CD8-positive, alpha-beta T cell (primary cell): ENCODE measurements at regions of chr7 and their contacts with region 1.

Region 1: DNA sequence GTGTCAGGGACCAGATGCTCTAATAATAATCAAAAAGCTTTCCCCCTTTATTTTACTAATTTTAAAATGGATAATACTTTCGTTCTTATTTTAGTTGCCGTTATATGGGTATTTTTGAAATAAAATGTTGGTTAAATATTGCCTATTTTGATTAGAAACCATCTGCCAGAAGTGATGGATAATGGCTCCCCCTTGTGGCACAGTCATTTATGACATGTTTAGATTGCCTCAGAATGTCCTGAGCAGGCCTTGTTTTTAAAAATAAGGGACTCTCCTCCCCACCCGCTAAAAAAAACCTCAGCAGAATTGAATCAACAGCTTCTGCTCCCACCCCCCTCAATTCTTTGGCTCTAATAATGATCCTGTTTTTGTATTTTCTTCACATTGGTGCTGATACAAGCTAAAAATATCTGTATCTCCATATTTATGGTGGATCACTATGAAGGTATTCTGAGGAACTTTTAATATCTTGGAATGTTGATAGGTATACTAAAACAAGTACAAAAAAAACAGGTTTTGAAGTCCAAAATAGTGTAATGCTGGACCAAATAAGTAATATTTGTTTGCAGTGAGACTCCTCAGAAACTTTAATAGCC is 38.8 kb downstream of the TMEM60 start:
- DNase-seq: peak; percentile 37 to 86 (median 69)
- ATAC-seq: peak; percentile 88
- H3K4me3 ChIP-seq: no peak overlapping the region
- H3K4me3 Mint-ChIP-seq: no peak overlapping the region
- H3K27ac ChIP-seq: no peak overlapping the region
- H3K27ac Mint-ChIP-seq: peak overlapping the region; percentile 17
- H3K4me1 ChIP-seq: no peaks in the 10 kb centered on the region
- H3K4me1 Mint-ChIP-seq: peaks cover 51% of the 10 kb centered on the region
- H3K27me3 ChIP-seq: no peaks in the 10 kb centered on the region
- H3K27me3 Mint-ChIP-seq: no peaks in the 10 kb centered on the region
- CTCF ChIP-seq: peak; percentile 97

Region 2: DNA sequence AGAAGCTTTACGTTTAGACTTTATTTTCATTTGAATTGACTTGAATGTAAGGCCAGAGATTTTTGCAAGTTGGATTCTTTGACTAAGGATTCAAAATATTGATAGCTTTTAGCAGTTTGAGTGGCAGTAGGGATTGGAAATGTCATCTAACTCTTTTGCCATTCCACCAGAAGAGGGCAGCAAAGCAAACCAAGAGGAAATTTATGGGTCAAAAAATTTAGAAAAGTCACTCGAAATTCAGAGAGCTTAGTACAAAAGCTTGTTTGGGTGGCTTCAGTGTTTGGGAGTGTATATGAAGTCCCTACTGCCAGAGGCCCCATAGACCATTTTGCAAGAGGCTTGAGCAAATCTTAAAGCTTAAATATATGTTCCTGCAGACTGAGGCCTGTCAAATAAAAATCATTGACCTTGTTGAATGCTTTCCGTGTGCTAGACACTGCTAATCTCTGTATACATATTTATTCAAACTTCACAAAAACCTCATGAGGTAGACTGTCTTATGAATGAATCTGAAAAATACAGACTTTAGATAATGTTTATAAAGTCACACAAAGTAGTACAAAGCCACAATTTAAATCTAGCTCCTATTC is 107.7 kb before region 1 on chr7:
- CTCF ChIA-PET with region 1: interaction called, 102 read pairs
- POLR2A ChIA-PET with region 1: no interaction called
- intact Hi-C with region 1: loop called (anchors 1 kb)
- DNase-seq: peak in 5 of 9 experiments; percentile 13 to 62 (median 37)
- ATAC-seq: peak; percentile 44
- H3K4me3 ChIP-seq: no peak overlapping the region
- H3K4me3 Mint-ChIP-seq: no peak overlapping the region
- H3K27ac ChIP-seq: no peak overlapping the region
- H3K27ac Mint-ChIP-seq: no peak overlapping the region
- H3K4me1 ChIP-seq: no peaks in the 10 kb centered on the region
- H3K4me1 Mint-ChIP-seq: no peaks in the 10 kb centered on the region
- H3K27me3 ChIP-seq: no peaks in the 10 kb centered on the region
- H3K27me3 Mint-ChIP-seq: no peaks in the 10 kb centered on the region
- CTCF ChIP-seq: peak; percentile 78

Region 3: DNA sequence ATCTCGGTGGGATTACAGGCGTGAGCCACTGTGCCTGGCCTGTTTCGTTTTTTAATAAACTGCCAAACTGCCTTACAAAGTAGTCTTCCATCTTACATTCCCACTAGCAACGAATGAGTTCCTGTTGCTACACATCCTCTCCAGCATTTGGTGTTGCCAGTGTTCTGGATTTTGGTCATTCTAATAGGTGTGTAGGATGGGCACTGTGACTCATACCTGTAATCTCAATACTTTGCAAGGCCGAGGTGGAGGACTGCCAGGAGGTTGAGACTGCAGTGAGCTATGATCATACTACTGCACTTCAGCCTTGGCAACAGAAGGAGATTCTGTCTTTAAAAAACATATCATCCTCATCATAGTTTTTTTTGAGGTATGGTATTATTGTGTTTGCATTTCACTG is 84.5 kb before region 1 on chr7:
- CTCF ChIA-PET with region 1: interaction called, 10 read pairs
- POLR2A ChIA-PET with region 1: no interaction called
- intact Hi-C with region 1: loop called in 1 of 2 experiments (anchors 5 kb)
- DNase-seq: no peak
- ATAC-seq: no peak
- H3K4me3 ChIP-seq: no peak overlapping the region
- H3K4me3 Mint-ChIP-seq: no peak overlapping the region
- H3K27ac ChIP-seq: no peak overlapping the region
- H3K27ac Mint-ChIP-seq: no peak overlapping the region
- H3K4me1 ChIP-seq: no peaks in the 10 kb centered on the region
- H3K4me1 Mint-ChIP-seq: no peaks in the 10 kb centered on the region
- H3K27me3 ChIP-seq: no peaks in the 10 kb centered on the region
- H3K27me3 Mint-ChIP-seq: no peaks in the 10 kb centered on the region
- CTCF ChIP-seq: no peak

Region 4: GRCh38 chr7:77734659-77735421 is 24.6 kb before region 1 on chr7:
- CTCF ChIA-PET with region 1: interaction called, 7 read pairs
- POLR2A ChIA-PET with region 1: no interaction called
- intact Hi-C with region 1: loop called in 1 of 2 experiments (anchors 2 kb)
- DNase-seq: no peak
- ATAC-seq: no peak
- H3K4me3 ChIP-seq: no peak overlapping the region
- H3K4me3 Mint-ChIP-seq: no peak overlapping the region
- H3K27ac ChIP-seq: no peak overlapping the region
- H3K27ac Mint-ChIP-seq: no peak overlapping the region
- H3K4me1 ChIP-seq: peaks cover 15% of the 10 kb centered on the region
- H3K4me1 Mint-ChIP-seq: peaks cover 47% of the 10 kb centered on the region
- H3K27me3 ChIP-seq: no peaks in the 10 kb centered on the region
- H3K27me3 Mint-ChIP-seq: no peaks in the 10 kb centered on the region
- CTCF ChIP-seq: no peak

Region 5: GRCh38 chr7:78039790-78040776 is 280.7 kb after region 1 on chr7:
- CTCF ChIA-PET with region 1: interaction called, 3 read pairs
- POLR2A ChIA-PET with region 1: no interaction called
- intact Hi-C with region 1: loop called in 1 of 2 experiments (anchors 10 kb)
- DNase-seq: peak; percentile 4 to 72 (median 28)
- ATAC-seq: peak; percentile 58
- H3K4me3 ChIP-seq: no peak overlapping the region
- H3K4me3 Mint-ChIP-seq: no peak overlapping the region
- H3K27ac ChIP-seq: no peak overlapping the region
- H3K27ac Mint-ChIP-seq: no peak overlapping the region
- H3K4me1 ChIP-seq: peaks cover 3% of the 10 kb centered on the region
- H3K4me1 Mint-ChIP-seq: peaks cover 2% of the 10 kb centered on the region
- H3K27me3 ChIP-seq: no peaks in the 10 kb centered on the region
- H3K27me3 Mint-ChIP-seq: peaks cover 27% of the 10 kb centered on the region
- CTCF ChIP-seq: peak; percentile 79